ENCODE measurements at regions of chr7 and their contacts with region 1.

Region 1: GRCh38 chr7:38215735-38216670 is 38.0 kb downstream of the STARD3NL start:
- DNase-seq: peak; percentile 31
- ATAC-seq: peak; percentile 98
- H3K4me3 ChIP-seq: no peak overlapping the region
- H3K27ac ChIP-seq: no peak overlapping the region
- H3K4me1 ChIP-seq: no peaks in the 10 kb centered on the region
- H3K27me3 ChIP-seq: no peaks in the 10 kb centered on the region
- CTCF ChIP-seq: peak; percentile 71 to 98 (median 97)
- POLR2A ChIP-seq: no peak
- RAD21 ChIP-seq: peak; percentile 68

Region 2: DNA sequence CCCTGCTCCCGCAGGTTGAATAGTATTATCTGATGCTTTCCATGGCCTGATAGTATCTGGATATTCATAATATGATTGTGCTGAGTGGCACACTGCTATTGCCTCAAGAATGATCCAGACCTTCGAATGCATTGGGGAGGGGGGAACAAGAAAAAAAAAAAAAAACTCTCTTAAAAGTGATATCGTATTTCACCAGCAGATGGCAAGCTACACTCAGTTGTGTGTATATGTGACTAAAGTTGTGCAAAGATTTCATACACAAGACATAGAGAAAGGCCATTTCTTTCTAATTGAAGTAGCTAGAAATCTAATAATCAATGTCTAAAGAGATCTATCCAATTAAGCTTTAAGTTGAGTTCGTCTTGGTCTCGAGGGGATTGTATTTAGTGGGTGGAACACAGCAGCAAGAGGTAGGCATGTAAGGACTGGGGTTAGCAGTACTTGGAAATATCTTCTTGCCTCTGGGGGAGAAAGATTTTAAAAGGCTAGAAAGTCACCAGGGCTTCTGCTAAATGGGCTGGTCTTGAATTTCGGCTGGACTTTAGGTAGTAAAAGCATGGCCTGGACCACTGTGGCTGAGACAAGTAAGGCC is 314.7 kb before region 1 on chr7:
- CTCF ChIA-PET with region 1: interaction called, 12 read pairs
- POLR2A ChIA-PET with region 1: no interaction called
- RAD21 ChIA-PET with region 1: no interaction called
- intact Hi-C with region 1: loop called (anchors 2 kb)
- DNase-seq: peak; percentile 13
- ATAC-seq: peak; percentile 55; the same call in 1 of the 2 replicates
- H3K4me3 ChIP-seq: no peak overlapping the region
- H3K27ac ChIP-seq: no peak overlapping the region
- H3K4me1 ChIP-seq: peaks cover 0 to 4% of the 10 kb centered on the region in 2 experiments; a peak in 1 of 4 replicates
- H3K27me3 ChIP-seq: no peaks in the 10 kb centered on the region
- CTCF ChIP-seq: peak; percentile 32 to 71 (median 50); a peak in 3 of 6 replicates
- POLR2A ChIP-seq: no peak
- RAD21 ChIP-seq: peak; percentile 65

Region 3: GRCh38 chr7:38107486-38107893 is 108.5 kb before region 1 on chr7:
- CTCF ChIA-PET with region 1: interaction called, 20 read pairs
- POLR2A ChIA-PET with region 1: no interaction called
- RAD21 ChIA-PET with region 1: no interaction called
- intact Hi-C with region 1: no loop called
- DNase-seq: peak; percentile 48
- ATAC-seq: peak; percentile 94
- H3K4me3 ChIP-seq: no peak overlapping the region
- H3K27ac ChIP-seq: no peak overlapping the region
- H3K4me1 ChIP-seq: no peaks in the 10 kb centered on the region
- H3K27me3 ChIP-seq: peaks cover 20% of the 10 kb centered on the region
- CTCF ChIP-seq: peak; percentile 79 to 89 (median 79)
- POLR2A ChIP-seq: no peak
- RAD21 ChIP-seq: peak; percentile 72

Region 4: GRCh38 chr7:38195804-38196595 is 20.0 kb before region 1 on chr7:
- CTCF ChIA-PET with region 1: interaction called, 17 read pairs
- POLR2A ChIA-PET with region 1: no interaction called
- RAD21 ChIA-PET with region 1: no interaction called
- intact Hi-C with region 1: no loop called
- DNase-seq: no peak
- ATAC-seq: no peak
- H3K4me3 ChIP-seq: no peak overlapping the region
- H3K27ac ChIP-seq: no peak overlapping the region
- H3K4me1 ChIP-seq: no peaks in the 10 kb centered on the region
- H3K27me3 ChIP-seq: no peaks in the 10 kb centered on the region
- CTCF ChIP-seq: no peak
- POLR2A ChIP-seq: no peak
- RAD21 ChIP-seq: no peak

Region 5: DNA sequence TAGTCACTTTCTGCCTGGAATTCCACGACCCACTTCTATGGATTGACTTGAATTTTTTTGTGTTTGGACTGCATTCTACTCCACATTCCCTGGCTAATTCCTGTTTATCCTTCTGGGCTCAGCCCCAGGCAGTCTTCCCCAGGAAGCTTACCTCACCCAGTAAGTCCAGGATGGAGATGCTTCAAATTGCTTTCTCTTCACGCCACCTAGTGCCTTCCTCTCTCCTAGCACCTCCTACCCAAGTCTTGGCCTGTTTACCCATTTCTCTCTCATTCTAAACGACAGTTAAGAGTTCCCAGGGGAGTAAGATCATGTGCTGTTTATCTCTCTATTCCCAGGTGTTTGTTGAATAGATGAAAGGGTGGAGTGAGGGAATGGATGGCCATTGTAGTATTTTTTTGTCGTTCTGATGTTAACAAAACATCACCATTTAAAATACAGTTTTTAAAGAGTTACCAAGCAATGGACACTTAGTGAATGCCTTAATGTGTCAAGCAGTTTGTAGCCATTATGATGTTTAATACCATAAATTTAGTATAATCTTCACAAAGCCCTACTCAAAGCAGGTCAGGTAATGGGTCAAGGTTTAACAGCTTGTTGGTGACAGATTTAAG is 102.9 kb after region 1 on chr7:
- CTCF ChIA-PET with region 1: interaction called, 13 read pairs
- POLR2A ChIA-PET with region 1: no interaction called
- RAD21 ChIA-PET with region 1: interaction called, 3 to 4 read pairs
- intact Hi-C with region 1: loop called (anchors 5 kb)
- DNase-seq: peak; percentile 40
- ATAC-seq: peak; percentile 95
- H3K4me3 ChIP-seq: no peak overlapping the region
- H3K27ac ChIP-seq: no peak overlapping the region
- H3K4me1 ChIP-seq: peaks cover 4 to 10% of the 10 kb centered on the region in 2 experiments; a peak in 2 of 4 replicates
- H3K27me3 ChIP-seq: 0 out of 2 replicates have a peak, but pooled peaks cover 6% of the 10 kb centered on the region
- CTCF ChIP-seq: peak; percentile 50 to 78 (median 70)
- POLR2A ChIP-seq: no peak
- RAD21 ChIP-seq: peak; percentile 72

Region 6: DNA sequence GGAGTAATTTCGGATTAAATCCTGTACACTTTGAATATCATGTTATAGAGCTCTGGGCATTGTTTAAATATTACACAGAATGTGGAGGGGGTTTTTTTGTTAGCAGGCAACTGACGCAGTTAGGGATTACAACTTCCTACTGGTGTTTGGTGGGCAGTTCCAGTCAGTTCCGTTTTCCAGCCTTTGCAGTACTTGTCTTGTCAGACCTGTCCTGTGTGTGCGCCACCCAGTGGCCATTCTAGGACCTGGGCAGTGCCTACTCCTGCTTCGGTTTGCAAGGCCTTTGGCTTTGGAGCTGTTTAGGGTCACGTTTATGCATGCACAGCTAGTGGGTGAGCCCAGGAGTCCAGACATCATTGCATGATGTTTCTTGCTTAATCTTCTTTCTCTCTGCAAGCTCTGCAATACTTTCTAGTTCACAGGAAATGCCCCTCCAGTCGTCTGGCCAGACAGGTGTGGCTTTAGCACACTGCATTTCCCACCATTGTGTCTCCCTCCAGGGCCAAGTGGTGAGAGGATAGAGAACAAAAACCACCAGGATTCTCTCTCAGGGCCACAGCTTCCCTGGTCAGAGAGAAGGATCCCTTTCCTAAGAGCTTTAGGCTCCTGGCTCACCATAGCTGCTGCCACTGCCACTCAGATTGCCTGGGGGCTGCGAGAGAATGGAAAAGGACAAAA is 154.0 kb after region 1 on chr7:
- CTCF ChIA-PET with region 1: interaction called, 10 read pairs
- POLR2A ChIA-PET with region 1: no interaction called
- RAD21 ChIA-PET with region 1: no interaction called
- intact Hi-C with region 1: no loop called
- DNase-seq: peak; percentile 80
- ATAC-seq: peak; percentile 91
- H3K4me3 ChIP-seq: no peak overlapping the region
- H3K27ac ChIP-seq: no peak overlapping the region
- H3K4me1 ChIP-seq: peaks cover 0 to 7% of the 10 kb centered on the region in 2 experiments; a peak in 2 of 4 replicates
- H3K27me3 ChIP-seq: no peaks in the 10 kb centered on the region
- CTCF ChIP-seq: peak; percentile 63 to 95 (median 94); a peak in 5 of 6 replicates
- POLR2A ChIP-seq: no peak
- RAD21 ChIP-seq: peak; percentile 20; the same call in 1 of the 2 replicates

Region 7: DNA sequence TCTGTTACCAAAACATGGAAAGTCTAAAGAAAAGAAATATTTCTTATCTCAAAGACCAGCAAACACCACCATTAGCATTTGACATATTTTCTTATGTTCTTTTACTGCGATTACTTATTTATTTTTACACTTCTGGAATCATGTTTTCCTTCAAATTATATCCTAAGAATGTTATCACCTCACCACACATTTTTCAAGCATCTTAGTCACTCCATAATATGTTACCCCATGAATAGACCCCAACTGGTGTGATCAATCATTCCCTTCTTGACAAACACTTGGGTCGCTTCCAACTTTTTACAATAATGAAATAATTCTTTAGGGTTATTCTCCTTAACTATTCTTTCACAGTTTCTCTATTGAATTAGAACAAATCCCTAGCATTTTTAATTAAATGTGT is 347.7 kb after region 1 on chr7:
- CTCF ChIA-PET with region 1: no interaction called
- POLR2A ChIA-PET with region 1: no interaction called
- RAD21 ChIA-PET with region 1: no interaction called
- intact Hi-C with region 1: no loop called
- DNase-seq: no peak
- ATAC-seq: no peak
- H3K4me3 ChIP-seq: no peak overlapping the region
- H3K27ac ChIP-seq: no peak overlapping the region
- H3K4me1 ChIP-seq: no peaks in the 10 kb centered on the region
- H3K27me3 ChIP-seq: peaks cover 6% of the 10 kb centered on the region; the same call in 1 of the 2 replicates
- CTCF ChIP-seq: no peak
- POLR2A ChIP-seq: no peak
- RAD21 ChIP-seq: no peak

Measured in HCT116 (cell line).